OCI-LY7 (cell line): ENCODE measurements at regions of chr11 and their contacts with region 1.

Region 1: GRCh38 chr11:94519478-94520084 is 7.3 kb downstream of the C11orf97 start:
- DNase-seq: peak; percentile 56
- H3K4me3 ChIP-seq: no peak overlapping the region
- H3K27ac ChIP-seq: no peak overlapping the region
- H3K4me1 ChIP-seq: no peaks in the 10 kb centered on the region
- CTCF ChIP-seq: peak; percentile 94

Region 2: DNA sequence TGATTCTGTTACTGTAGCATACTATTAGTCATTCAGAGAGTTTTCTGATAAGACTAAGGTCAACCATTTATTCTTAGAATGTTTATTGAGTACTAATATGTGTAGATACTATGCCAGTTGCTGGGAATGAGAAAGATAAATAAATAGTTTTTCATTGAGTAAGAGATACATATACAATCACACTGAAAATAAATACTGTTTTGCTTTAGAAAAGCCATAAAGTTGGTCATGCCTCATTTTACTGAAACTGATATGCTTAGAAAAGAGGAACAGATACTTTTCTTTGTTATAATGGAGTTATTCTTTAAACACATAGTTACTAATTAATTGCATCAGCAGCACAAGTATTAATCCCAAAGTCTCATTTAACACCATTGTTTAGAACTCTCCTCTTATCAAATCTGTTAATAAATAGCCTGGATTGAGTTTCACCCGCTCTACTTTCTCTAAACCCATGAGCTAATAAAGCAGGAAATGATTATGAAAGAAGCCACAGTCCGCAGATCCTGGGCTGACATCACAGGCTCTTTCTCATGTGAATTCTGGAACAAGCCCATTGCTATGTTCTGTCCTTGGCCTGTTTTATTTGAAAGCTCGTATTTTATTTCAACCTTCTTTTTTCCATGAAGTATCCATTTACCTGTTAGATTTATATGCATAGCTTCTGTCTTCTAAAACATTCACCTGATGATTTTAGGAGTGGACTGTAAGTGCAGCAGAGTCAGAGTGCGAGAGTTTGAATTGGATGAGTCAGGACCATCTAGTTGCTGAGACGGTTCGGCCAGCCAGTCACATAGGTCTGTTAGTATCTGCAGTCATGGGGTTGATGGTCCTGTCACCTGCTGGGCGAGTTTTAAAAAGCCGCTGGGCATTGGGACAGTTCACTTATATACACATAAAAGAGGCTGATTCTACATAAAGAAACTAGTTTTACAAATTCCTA is 83.1 kb after region 1 on chr11:
- CTCF ChIA-PET with region 1: interaction called, 3 read pairs
- POLR2A ChIA-PET with region 1: interaction called, 4 read pairs
- intact Hi-C with region 1: loop called (anchors 1 kb)
- DNase-seq: peak; percentile 75
- H3K4me3 ChIP-seq: peak overlapping the region; percentile 25
- H3K27ac ChIP-seq: peak overlapping the region; percentile 61
- H3K4me1 ChIP-seq: peaks cover 19% of the 10 kb centered on the region
- CTCF ChIP-seq: peak; percentile 75